ENCODE measurements at regions of chr5 and their contacts with region 1.

Region 1: GRCh38 chr5:140157032-140157803 is 17.8 kb upstream of the CYSTM1 start:
- DNase-seq: peak; percentile 33
- ATAC-seq: peak; percentile 99
- H3K4me3 ChIP-seq: peak overlapping the region; percentile 41; the same call in 1 of the 2 replicates
- H3K27ac ChIP-seq: peak overlapping the region; percentile 24; the same call in 1 of the 2 replicates
- H3K4me1 ChIP-seq: peaks cover 4% of the 10 kb centered on the region
- H3K27me3 ChIP-seq: no peaks in the 10 kb centered on the region; a peak in 1 of 4 replicates
- CTCF ChIP-seq: peak; percentile 88 to 95 (median 94)
- EP300 ChIP-seq: no peak
- POLR2A ChIP-seq: no peak
- RAD21 ChIP-seq: peak; percentile 96

Region 2: DNA sequence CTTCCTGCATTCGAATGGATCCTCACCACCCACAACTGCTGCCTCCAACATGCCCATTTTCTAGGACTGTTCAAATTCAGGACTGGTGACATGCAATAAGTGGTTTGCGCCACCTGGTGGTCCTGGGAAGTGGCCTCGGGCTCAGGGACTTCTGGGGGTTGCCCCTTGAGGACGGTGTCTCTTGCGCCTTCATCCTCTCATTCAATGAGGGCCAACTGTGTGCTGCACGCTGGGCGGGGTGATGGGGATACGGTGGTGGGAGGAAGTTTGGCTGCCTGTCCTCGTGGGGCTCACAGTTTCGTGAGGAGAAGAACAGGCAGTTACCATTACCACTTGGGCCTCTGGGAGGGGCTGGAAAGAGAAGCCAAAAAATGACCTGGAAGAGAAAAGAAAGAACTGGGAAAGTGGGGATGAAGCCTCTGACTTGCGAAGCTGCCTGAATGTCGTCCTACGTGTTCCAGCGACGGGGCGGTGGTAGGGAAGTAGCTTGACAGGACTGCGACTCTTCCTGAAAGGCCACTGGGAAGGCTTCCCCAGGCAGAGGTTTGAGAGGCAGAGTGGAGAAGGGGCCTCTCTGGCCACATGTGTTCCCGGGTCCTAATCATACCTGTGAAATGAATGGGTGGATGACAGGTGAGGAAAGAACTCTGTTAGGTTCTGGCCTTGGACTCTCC is 312.6 kb before region 1 on chr5:
- CTCF ChIA-PET with region 1: interaction called, 3 read pairs
- POLR2A ChIA-PET with region 1: no interaction called
- RAD21 ChIA-PET with region 1: no interaction called
- SMC1A ChIA-PET with region 1: no interaction called
- in situ Hi-C with region 1: no loop called
- intact Hi-C with region 1: loop called (anchors 2 kb)
- DNase-seq: peak; percentile 23
- ATAC-seq: peak; percentile 82
- H3K4me3 ChIP-seq: no peak overlapping the region
- H3K27ac ChIP-seq: no peak overlapping the region
- H3K4me1 ChIP-seq: peaks cover 12% of the 10 kb centered on the region
- H3K27me3 ChIP-seq: no peaks in the 10 kb centered on the region; a peak in 1 of 4 replicates
- CTCF ChIP-seq: peak; percentile 85 to 93 (median 89)
- EP300 ChIP-seq: no peak
- POLR2A ChIP-seq: no peak
- RAD21 ChIP-seq: peak; percentile 82

Region 3: DNA sequence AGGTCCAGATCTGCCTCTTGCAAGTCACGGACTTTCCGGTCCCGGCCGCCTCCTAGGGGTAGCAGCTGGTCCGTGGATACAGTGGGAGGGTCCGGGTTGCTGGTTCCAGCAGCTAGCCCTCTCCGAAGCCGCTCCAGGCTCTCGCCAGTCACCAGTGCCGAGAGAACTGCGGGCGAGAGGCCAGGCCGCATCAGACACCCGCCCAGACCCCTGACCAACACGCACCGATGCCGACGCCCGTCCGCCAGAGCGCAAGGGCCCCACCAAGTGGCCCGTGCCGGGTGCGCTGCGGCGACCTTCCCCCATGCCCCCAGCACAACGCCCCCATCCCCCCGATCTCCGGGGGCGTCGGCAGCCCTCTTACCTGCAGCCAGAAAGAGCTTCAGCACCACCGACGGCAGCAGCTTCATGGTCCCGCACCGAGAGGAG is 188.7 kb after region 1 on chr5:
- CTCF ChIA-PET with region 1: no interaction called
- POLR2A ChIA-PET with region 1: no interaction called
- RAD21 ChIA-PET with region 1: no interaction called
- SMC1A ChIA-PET with region 1: no interaction called
- in situ Hi-C with region 1: no loop called
- intact Hi-C with region 1: no loop called
- DNase-seq: no peak
- ATAC-seq: peak; percentile 23
- H3K4me3 ChIP-seq: peak overlapping the region; percentile 66; the same call in 1 of the 2 replicates
- H3K27ac ChIP-seq: no peak overlapping the region
- H3K4me1 ChIP-seq: peaks cover 32% of the 10 kb centered on the region
- H3K27me3 ChIP-seq: no peaks in the 10 kb centered on the region; a peak in 1 of 4 replicates
- CTCF ChIP-seq: 0 out of 6 replicates have a peak, but pooled peaks of 1 of the 3 experiments have one; percentile 4
- EP300 ChIP-seq: no peak
- POLR2A ChIP-seq: no peak
- RAD21 ChIP-seq: no peak